ENCODE measurements at regions of chr9 and their contacts with region 1.

Region 1: DNA sequence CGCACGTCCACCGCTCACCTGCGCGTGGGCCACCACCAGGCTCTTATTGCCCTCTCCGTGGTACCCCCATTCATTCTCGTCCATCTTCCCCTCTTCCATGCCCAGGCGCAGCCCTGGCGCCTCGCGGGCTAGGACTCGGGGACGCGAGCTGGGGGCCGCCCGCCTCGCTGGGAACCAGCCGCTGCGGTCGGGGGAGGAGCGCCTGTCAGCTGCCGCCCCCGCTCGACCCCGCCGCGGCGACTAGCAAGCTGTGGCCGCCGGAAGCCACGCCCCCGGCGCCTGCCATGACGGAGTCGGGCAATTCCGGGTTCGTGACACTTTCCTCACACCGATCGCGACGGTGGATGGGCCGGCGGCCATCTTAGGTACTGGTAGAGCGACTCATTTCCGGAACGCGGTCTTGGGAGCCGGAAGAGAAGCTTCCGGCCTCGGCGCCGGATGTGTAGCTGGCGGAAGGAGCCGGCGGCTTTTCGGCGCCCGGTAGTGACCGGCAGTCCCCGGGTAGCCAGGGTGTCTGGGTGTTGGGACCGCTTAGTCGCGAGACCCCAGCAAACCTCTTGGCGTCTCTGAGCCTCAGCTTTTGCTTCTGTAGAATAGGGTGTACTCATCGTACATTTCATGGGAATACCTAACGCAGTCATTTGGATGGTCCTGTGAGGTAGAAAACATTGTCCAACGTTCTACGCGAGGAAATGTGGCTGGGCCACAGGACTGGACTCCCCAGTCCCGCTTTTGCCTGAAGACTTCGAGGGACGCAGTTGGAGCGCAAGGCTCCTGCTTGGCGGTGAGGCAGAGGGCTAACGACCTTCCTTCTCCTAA is at the start of gene IPPK:
- DNase-seq: peak; percentile 94
- ATAC-seq: peak; percentile 93
- H3K4me3 Mint-ChIP-seq: peak within 1 kb of the TSS; percentile 96
- H3K27ac Mint-ChIP-seq: peak within 1 kb of the TSS; percentile 94
- H3K4me1 Mint-ChIP-seq: peaks cover 25% of the 10 kb centered on the region
- H3K27me3 Mint-ChIP-seq: no peaks in the 10 kb centered on the region
- CTCF ChIP-seq: no peak
- total RNA-seq, gene IPPK: 9.7 and 9.8 TPM in 2 replicates

Region 2: GRCh38 chr9:91282292-91282691 is 1387.8 kb before region 1 on chr9:
- CTCF ChIA-PET with region 1: no interaction called
- POLR2A ChIA-PET with region 1: no interaction called
- intact Hi-C with region 1: no loop called
- DNase-seq: no peak
- ATAC-seq: no peak
- H3K4me3 Mint-ChIP-seq: no peak overlapping the region
- H3K27ac Mint-ChIP-seq: no peak overlapping the region
- H3K4me1 Mint-ChIP-seq: no peaks in the 10 kb centered on the region
- H3K27me3 Mint-ChIP-seq: no peaks in the 10 kb centered on the region
- CTCF ChIP-seq: no peak

Region 3: GRCh38 chr9:92115071-92115858 is 554.8 kb before region 1 on chr9 and contains the start of gene SPTLC1:
- CTCF ChIA-PET with region 1: no interaction called
- POLR2A ChIA-PET with region 1: interaction called, 14 read pairs
- intact Hi-C with region 1: loop called (anchors 1 kb)
- DNase-seq: peak; percentile 93
- ATAC-seq: peak; percentile 98
- H3K4me3 Mint-ChIP-seq: peak within 1 kb of the TSS; percentile 100
- H3K27ac Mint-ChIP-seq: peak within 1 kb of the TSS; percentile 99
- H3K4me1 Mint-ChIP-seq: peaks cover 24% of the 10 kb centered on the region
- H3K27me3 Mint-ChIP-seq: no peaks in the 10 kb centered on the region
- CTCF ChIP-seq: no peak
- total RNA-seq, gene SPTLC1: 40.8 and 41.0 TPM in 2 replicates

Region 4: GRCh38 chr9:92293452-92294296 is 376.4 kb before region 1 on chr9 and contains the start of gene IARS1:
- CTCF ChIA-PET with region 1: no interaction called
- POLR2A ChIA-PET with region 1: no interaction called
- intact Hi-C with region 1: loop called (anchors 1 kb)
- DNase-seq: peak; percentile 100
- ATAC-seq: peak; percentile 90
- H3K4me3 Mint-ChIP-seq: peak within 1 kb of the TSS; percentile 98
- H3K27ac Mint-ChIP-seq: peak within 1 kb of the TSS; percentile 98
- H3K4me1 Mint-ChIP-seq: peaks cover 76% of the 10 kb centered on the region
- H3K27me3 Mint-ChIP-seq: no peaks in the 10 kb centered on the region
- CTCF ChIP-seq: no peak
- total RNA-seq, gene IARS1: 176 and 205 TPM in 2 replicates

Region 5: DNA sequence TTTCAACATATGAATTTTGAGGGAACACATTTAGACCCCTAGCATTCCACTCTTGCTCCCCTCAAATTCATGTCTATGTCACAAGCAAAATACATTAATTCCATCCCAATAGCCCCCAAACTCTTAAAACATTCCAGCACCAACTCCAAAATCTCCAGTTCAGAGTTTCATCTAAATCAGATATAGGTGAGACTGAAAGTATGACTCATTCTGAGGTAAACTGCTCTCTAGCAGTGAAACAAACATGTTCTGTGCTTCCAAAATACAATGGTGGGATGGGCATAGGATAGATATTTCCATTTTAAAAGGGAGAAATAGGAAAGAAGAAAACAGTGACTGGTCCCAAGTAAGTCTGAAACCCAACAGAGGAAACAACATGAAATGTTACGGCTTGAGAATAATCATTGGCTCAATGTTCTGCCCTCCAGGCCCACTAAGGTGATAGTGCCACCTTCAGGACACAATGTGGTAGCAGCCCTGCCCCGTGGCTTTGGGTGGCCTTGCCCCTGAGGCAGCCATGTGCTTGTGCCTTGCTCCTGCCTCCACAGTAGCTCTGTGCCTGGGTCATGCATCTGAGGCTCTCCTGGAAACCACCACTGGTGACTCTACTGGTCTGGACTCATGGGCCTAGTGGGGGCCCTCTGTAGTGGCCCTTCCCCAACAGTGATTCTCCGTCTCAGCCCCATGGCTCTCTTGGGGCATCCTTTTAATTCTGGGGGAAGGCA is 36.3 kb after region 1 on chr9:
- CTCF ChIA-PET with region 1: no interaction called
- POLR2A ChIA-PET with region 1: no interaction called
- intact Hi-C with region 1: loop called (anchors 5 kb)
- DNase-seq: no peak
- ATAC-seq: peak; percentile 58
- H3K4me3 Mint-ChIP-seq: no peak overlapping the region
- H3K27ac Mint-ChIP-seq: no peak overlapping the region
- H3K4me1 Mint-ChIP-seq: peaks cover 7% of the 10 kb centered on the region
- H3K27me3 Mint-ChIP-seq: no peaks in the 10 kb centered on the region
- CTCF ChIP-seq: no peak

Region 6: GRCh38 chr9:92790542-92791527 is 120.7 kb after region 1 on chr9:
- CTCF ChIA-PET with region 1: interaction called, 4 read pairs
- POLR2A ChIA-PET with region 1: no interaction called
- intact Hi-C with region 1: loop called (anchors 2 kb)
- DNase-seq: peak; percentile 65
- ATAC-seq: peak; percentile 98
- H3K4me3 Mint-ChIP-seq: no peak overlapping the region
- H3K27ac Mint-ChIP-seq: no peak overlapping the region
- H3K4me1 Mint-ChIP-seq: peaks cover 6% of the 10 kb centered on the region
- H3K27me3 Mint-ChIP-seq: peaks cover 12% of the 10 kb centered on the region
- CTCF ChIP-seq: peak; percentile 84

Region 7: DNA sequence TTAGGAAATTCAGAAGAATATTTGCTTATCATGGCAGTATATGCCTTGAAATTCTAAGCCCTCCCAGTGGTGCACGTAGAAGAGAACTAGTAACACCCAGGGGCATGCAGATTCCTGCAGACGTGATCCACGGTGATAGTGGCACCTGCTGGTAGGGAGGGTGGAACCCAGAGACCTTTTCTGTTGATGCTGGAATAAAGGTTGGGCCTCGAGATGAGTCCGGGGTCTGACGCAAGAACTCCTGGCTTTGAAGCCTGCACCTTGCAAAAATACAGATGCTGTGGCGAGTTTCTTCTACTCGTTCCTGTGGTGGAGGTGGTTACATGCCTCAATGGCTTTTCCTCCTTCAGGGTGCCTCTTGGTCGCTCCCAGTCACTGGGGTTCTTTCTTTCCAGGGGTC is 866.8 kb after region 1 on chr9:
- CTCF ChIA-PET with region 1: no interaction called
- POLR2A ChIA-PET with region 1: no interaction called
- intact Hi-C with region 1: no loop called
- DNase-seq: no peak
- ATAC-seq: no peak
- H3K4me3 Mint-ChIP-seq: no peak overlapping the region
- H3K27ac Mint-ChIP-seq: no peak overlapping the region
- H3K4me1 Mint-ChIP-seq: no peaks in the 10 kb centered on the region
- H3K27me3 Mint-ChIP-seq: no peaks in the 10 kb centered on the region
- CTCF ChIP-seq: no peak